GM12878 (cell line): ENCODE measurements at regions of chr2 and their contacts with region 1.

Region 1: DNA sequence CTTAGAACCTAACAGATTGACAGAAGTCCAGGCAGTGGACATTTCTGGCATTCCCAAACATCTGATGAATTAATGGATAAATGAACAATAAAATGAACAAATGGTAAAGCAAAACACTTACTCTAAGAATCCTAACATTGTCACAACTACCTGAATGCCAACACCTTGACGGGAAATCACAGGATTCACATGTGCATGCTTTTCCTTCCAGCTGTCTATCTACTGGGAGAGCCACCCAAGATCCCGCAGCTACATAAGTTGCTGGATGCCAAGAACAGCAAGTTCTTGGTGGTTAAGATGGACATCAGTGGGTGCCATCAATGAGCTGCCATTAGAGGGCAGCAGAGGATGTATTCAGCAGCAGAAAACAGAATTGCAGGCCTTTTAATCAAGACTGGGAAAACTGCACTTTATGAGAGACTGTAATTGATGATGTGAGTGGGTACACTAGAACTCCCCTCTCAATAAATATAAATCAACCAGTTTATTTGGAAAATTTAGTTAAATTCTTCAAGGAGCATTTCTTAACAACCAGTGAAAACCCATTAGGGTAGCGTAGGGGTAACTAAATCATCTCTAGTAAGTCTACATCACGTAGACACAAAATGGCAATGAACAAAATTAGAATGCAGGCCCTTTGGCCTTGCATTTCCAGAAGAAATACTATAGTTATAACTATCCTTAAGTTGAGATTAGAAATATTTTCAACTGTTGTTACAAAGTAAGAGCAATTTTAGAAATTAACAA is 45.6 kb downstream of the SESTD1 start:
- DNase-seq: peak; percentile 20
- ATAC-seq: peak; percentile 94
- H3K4me3 ChIP-seq: no peak overlapping the region
- H3K27ac ChIP-seq: no peak overlapping the region
- H3K4me1 ChIP-seq: no peaks in the 10 kb centered on the region
- H3K27me3 ChIP-seq: no peaks in the 10 kb centered on the region
- CTCF ChIP-seq: peak; percentile 85 to 94 (median 94); a peak in 5 of 6 replicates
- EP300 ChIP-seq: no peak
- POLR2A ChIP-seq: no peak
- RAD21 ChIP-seq: peak; percentile 98

Region 2: DNA sequence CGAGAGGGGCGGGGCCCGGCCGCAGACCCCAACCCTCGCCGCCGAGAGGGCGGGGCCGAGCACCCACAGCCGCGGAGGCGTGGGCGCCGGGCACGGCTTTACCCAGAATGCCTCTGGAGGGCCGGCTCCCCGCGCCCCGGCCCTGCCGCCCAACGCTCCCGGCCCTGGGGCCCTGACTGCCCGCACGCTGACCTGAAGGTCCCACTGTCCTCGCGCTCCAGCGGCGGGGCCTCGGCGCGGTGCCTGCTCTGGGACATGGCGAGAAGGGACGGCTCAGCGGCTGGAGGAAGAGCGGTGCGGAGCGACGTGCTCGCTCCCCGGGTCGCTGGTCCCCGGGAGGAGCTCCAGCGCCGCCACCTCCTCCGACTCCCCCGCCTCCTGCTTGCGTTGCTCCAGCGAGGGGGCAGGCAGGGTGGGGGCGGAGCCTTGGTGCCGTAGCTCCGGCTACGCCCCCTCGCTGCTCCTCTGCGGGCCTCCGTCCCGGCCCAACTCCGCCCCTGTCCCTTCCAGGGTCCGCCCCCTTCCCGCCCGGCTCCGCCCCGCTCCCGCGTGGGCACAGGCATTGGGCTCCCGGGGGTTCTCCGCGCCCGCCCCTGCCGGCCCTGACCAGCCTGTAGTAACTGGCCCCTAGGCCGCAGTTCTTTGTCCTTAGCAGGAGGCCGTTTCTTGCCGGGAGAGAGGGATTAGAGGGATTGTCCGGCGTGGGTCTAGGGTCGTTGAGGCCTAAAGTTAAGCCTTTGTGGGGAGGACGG is 768.1 kb before region 1 on chr2 and contains the starts of genes PJVK and PRKRA:
- CTCF ChIA-PET with region 1: no interaction called
- POLR2A ChIA-PET with region 1: no interaction called
- RAD21 ChIA-PET with region 1: no interaction called
- SMC1A ChIA-PET with region 1: no interaction called
- in situ Hi-C with region 1: no loop called
- intact Hi-C with region 1: no loop called
- DNase-seq: peak; percentile 81
- ATAC-seq: peak; percentile 91
- H3K4me3 ChIP-seq: peak within 1 kb of the TSS; percentile 94
- H3K27ac ChIP-seq: peak within 1 kb of the TSS; percentile 94
- H3K4me1 ChIP-seq: peaks cover 9% of the 10 kb centered on the region
- H3K27me3 ChIP-seq: no peaks in the 10 kb centered on the region
- CTCF ChIP-seq: no peak
- EP300 ChIP-seq: 0 out of 4 replicates have a peak, but pooled peaks of 1 of the 2 experiments have one; percentile 2
- POLR2A ChIP-seq: peak; percentile 95
- RAD21 ChIP-seq: no peak
- polyA plus RNA-seq, gene PJVK: 2.1 to 3.0 TPM
- polyA plus RNA-seq, gene PRKRA: 19.1 to 25.1 TPM

Region 3: GRCh38 chr2:178579006-178579405 is 640.0 kb before region 1 on chr2:
- CTCF ChIA-PET with region 1: no interaction called
- POLR2A ChIA-PET with region 1: no interaction called
- RAD21 ChIA-PET with region 1: no interaction called
- SMC1A ChIA-PET with region 1: no interaction called
- in situ Hi-C with region 1: no loop called
- intact Hi-C with region 1: no loop called
- DNase-seq: no peak
- ATAC-seq: no peak
- H3K4me3 ChIP-seq: no peak overlapping the region
- H3K27ac ChIP-seq: no peak overlapping the region
- H3K4me1 ChIP-seq: no peaks in the 10 kb centered on the region
- H3K27me3 ChIP-seq: no peaks in the 10 kb centered on the region
- CTCF ChIP-seq: no peak
- EP300 ChIP-seq: no peak
- POLR2A ChIP-seq: no peak
- RAD21 ChIP-seq: no peak

Region 4: GRCh38 chr2:178891265-178891958 is 327.6 kb before region 1 on chr2:
- CTCF ChIA-PET with region 1: interaction called, 17 read pairs
- POLR2A ChIA-PET with region 1: no interaction called
- RAD21 ChIA-PET with region 1: no interaction called
- SMC1A ChIA-PET with region 1: interaction called, 4 read pairs
- in situ Hi-C with region 1: no loop called
- intact Hi-C with region 1: no loop called
- DNase-seq: peak; percentile 33
- ATAC-seq: peak; percentile 94
- H3K4me3 ChIP-seq: no peak overlapping the region
- H3K27ac ChIP-seq: no peak overlapping the region
- H3K4me1 ChIP-seq: no peaks in the 10 kb centered on the region
- H3K27me3 ChIP-seq: no peaks in the 10 kb centered on the region
- CTCF ChIP-seq: peak; percentile 87 to 91 (median 90)
- EP300 ChIP-seq: no peak
- POLR2A ChIP-seq: no peak
- RAD21 ChIP-seq: peak; percentile 89

Region 5: GRCh38 chr2:179253226-179253625 is 34.2 kb after region 1 on chr2:
- CTCF ChIA-PET with region 1: no interaction called
- POLR2A ChIA-PET with region 1: no interaction called
- RAD21 ChIA-PET with region 1: interaction called, 6 read pairs
- SMC1A ChIA-PET with region 1: interaction called, 12 read pairs
- in situ Hi-C with region 1: no loop called
- intact Hi-C with region 1: no loop called
- DNase-seq: no peak
- ATAC-seq: peak; percentile 75
- H3K4me3 ChIP-seq: no peak overlapping the region
- H3K27ac ChIP-seq: peak overlapping the region; percentile 63; the same call in 1 of the 2 replicates
- H3K4me1 ChIP-seq: peaks cover 42% of the 10 kb centered on the region
- H3K27me3 ChIP-seq: no peaks in the 10 kb centered on the region
- CTCF ChIP-seq: no peak
- EP300 ChIP-seq: no peak
- POLR2A ChIP-seq: no peak
- RAD21 ChIP-seq: no peak

Region 6: DNA sequence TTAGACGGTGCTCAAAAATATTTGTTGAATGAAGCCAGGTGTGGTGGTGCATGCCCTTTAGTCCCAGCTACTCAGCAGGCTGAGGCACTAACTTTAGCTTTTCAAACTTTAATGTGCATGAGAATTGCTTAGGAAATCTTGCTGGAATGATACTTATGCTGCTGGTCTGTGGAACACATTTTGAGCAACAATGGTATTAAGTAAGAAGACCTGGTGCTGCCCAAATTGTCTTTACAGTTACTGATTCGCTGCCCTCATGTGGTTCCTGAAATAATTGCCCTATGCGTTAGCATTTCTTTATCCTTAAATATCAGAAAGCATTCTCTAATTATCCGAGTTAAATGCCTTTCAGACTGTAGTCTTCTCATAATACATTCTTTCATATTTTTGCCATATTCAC is 121.6 kb after region 1 on chr2:
- CTCF ChIA-PET with region 1: interaction called, 11 read pairs
- POLR2A ChIA-PET with region 1: no interaction called
- RAD21 ChIA-PET with region 1: interaction called, 3 read pairs
- SMC1A ChIA-PET with region 1: interaction called, 3 read pairs
- in situ Hi-C with region 1: no loop called
- intact Hi-C with region 1: loop called (anchors 1 kb)
- DNase-seq: no peak
- ATAC-seq: peak; percentile 47; the same call in 1 of the 3 replicates
- H3K4me3 ChIP-seq: no peak overlapping the region
- H3K27ac ChIP-seq: no peak overlapping the region
- H3K4me1 ChIP-seq: no peaks in the 10 kb centered on the region
- H3K27me3 ChIP-seq: no peaks in the 10 kb centered on the region; a peak in 1 of 4 replicates
- CTCF ChIP-seq: peak; percentile 11 to 33 (median 28); a peak in 1 of 6 replicates
- EP300 ChIP-seq: no peak
- POLR2A ChIP-seq: no peak
- RAD21 ChIP-seq: peak; percentile 57

Region 7: GRCh38 chr2:179440642-179441251 is 221.7 kb after region 1 on chr2:
- CTCF ChIA-PET with region 1: interaction called, 46 read pairs
- POLR2A ChIA-PET with region 1: no interaction called
- RAD21 ChIA-PET with region 1: interaction called, 19 read pairs
- SMC1A ChIA-PET with region 1: interaction called, 8 read pairs
- in situ Hi-C with region 1: no loop called
- intact Hi-C with region 1: loop called (anchors 1 kb)
- DNase-seq: no peak
- ATAC-seq: peak; percentile 79
- H3K4me3 ChIP-seq: no peak overlapping the region
- H3K27ac ChIP-seq: no peak overlapping the region
- H3K4me1 ChIP-seq: no peaks in the 10 kb centered on the region
- H3K27me3 ChIP-seq: peaks cover 0 to 3% of the 10 kb centered on the region in 2 experiments; a peak in 1 of 4 replicates
- CTCF ChIP-seq: peak; percentile 47 to 65 (median 48); a peak in 5 of 6 replicates
- EP300 ChIP-seq: no peak
- POLR2A ChIP-seq: no peak
- RAD21 ChIP-seq: peak; percentile 69

Region 8: GRCh38 chr2:179467111-179467510 is 248.1 kb after region 1 on chr2:
- CTCF ChIA-PET with region 1: no interaction called
- POLR2A ChIA-PET with region 1: no interaction called
- RAD21 ChIA-PET with region 1: no interaction called
- SMC1A ChIA-PET with region 1: no interaction called
- in situ Hi-C with region 1: no loop called
- intact Hi-C with region 1: no loop called
- DNase-seq: no peak
- ATAC-seq: no peak
- H3K4me3 ChIP-seq: no peak overlapping the region
- H3K27ac ChIP-seq: no peak overlapping the region
- H3K4me1 ChIP-seq: no peaks in the 10 kb centered on the region
- H3K27me3 ChIP-seq: no peaks in the 10 kb centered on the region
- CTCF ChIP-seq: no peak
- EP300 ChIP-seq: no peak
- POLR2A ChIP-seq: no peak
- RAD21 ChIP-seq: no peak